Heart right ventricle (tissue), 16 donors: ENCODE measurements at regions of chr17 and their contacts with region 1.

Region 1: GRCh38 chr17:73770115-73770848 is 126.0 kb upstream of the SDK2 start:
- DNase-seq: peak; percentile 84 to 92
- ATAC-seq: peak; percentile 86 to 96 (median 94)
- H3K4me3 ChIP-seq: no peak overlapping the region
- H3K27ac ChIP-seq: peak overlapping the region in 6 of 10 donors; percentile 15 to 72 (median 50)
- H3K4me1 ChIP-seq: peaks cover 15 to 46% (median 24%) of the 10 kb centered on the region in 9 donors
- H3K27me3 ChIP-seq: no peaks in the 10 kb centered on the region
- CTCF ChIP-seq: no peak

Region 2: GRCh38 chr17:73645050-73645978 is 125.0 kb before region 1 on chr17:
- intact Hi-C with region 1: loop called in 1 of 10 experiments (anchors 5 kb)
- DNase-seq: peak; percentile 31 to 54
- ATAC-seq: peak; percentile 60 to 83 (median 76)
- H3K4me3 ChIP-seq: peak overlapping the region in 9 of 10 donors; percentile 42 to 66 (median 55)
- H3K27ac ChIP-seq: peak overlapping the region in 5 of 10 donors; percentile 1 to 60 (median 40)
- H3K4me1 ChIP-seq: peaks cover 0 to 31% (median 20%) of the 10 kb centered on the region in 9 donors
- H3K27me3 ChIP-seq: peaks cover 0 to 92% (median 70%) of the 10 kb centered on the region in 7 donors
- CTCF ChIP-seq: peak in 5 of 9 donors; percentile 6 to 31 (median 20)

Region 3: GRCh38 chr17:73719588-73720071 is 50.7 kb before region 1 on chr17:
- intact Hi-C with region 1: loop called in 1 of 10 experiments (anchors 5 kb)
- DNase-seq: peak; percentile 22 to 55
- ATAC-seq: peak; percentile 69 to 91 (median 78)
- H3K4me3 ChIP-seq: no peak overlapping the region
- H3K27ac ChIP-seq: peak overlapping the region in 1 of 10 donors; percentile 52
- H3K4me1 ChIP-seq: peaks cover 5 to 18% (median 10%) of the 10 kb centered on the region in 9 donors
- H3K27me3 ChIP-seq: peaks cover 0 to 14% (median 6%) of the 10 kb centered on the region in 7 donors
- CTCF ChIP-seq: no peak